ENCODE measurements at regions of chr22 and their contacts with region 1.

Region 1: GRCh38 chr22:45577746-45578523 is 75.3 kb downstream of the FBLN1 start:
- DNase-seq: peak; percentile 41
- H3K4me3 ChIP-seq: no peak overlapping the region
- H3K27ac ChIP-seq: no peak overlapping the region
- H3K27me3 ChIP-seq: no peaks in the 10 kb centered on the region
- CTCF ChIP-seq: peak; percentile 95

Region 2: DNA sequence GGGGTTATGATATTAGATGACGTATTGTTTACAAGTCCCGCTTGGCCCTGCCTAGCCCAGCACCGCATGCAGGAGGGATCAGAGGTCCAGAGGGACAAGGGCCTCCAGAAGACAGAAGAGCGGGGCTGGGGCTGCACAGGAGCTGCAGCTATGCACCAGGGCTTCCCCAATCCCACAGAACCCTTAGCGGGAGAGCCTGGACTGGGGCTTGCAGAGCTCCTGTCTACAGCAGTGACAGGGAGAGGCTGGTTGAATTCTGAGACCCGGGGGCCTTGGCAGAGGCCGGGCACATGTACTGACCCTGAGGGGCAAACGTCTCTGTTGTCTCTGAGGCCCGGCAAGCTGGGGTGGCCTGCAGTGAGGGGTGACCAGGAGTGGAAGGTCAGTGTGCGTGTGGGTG is 344.1 kb before region 1 on chr22:
- CTCF ChIA-PET with region 1: interaction called, 14 read pairs
- POLR2A ChIA-PET with region 1: no interaction called
- DNase-seq: no peak
- H3K4me3 ChIP-seq: no peak overlapping the region
- H3K27ac ChIP-seq: no peak overlapping the region
- H3K27me3 ChIP-seq: no peaks in the 10 kb centered on the region
- CTCF ChIP-seq: no peak